ENCODE measurements at regions of chr22 and their contacts with region 1.

Region 1: DNA sequence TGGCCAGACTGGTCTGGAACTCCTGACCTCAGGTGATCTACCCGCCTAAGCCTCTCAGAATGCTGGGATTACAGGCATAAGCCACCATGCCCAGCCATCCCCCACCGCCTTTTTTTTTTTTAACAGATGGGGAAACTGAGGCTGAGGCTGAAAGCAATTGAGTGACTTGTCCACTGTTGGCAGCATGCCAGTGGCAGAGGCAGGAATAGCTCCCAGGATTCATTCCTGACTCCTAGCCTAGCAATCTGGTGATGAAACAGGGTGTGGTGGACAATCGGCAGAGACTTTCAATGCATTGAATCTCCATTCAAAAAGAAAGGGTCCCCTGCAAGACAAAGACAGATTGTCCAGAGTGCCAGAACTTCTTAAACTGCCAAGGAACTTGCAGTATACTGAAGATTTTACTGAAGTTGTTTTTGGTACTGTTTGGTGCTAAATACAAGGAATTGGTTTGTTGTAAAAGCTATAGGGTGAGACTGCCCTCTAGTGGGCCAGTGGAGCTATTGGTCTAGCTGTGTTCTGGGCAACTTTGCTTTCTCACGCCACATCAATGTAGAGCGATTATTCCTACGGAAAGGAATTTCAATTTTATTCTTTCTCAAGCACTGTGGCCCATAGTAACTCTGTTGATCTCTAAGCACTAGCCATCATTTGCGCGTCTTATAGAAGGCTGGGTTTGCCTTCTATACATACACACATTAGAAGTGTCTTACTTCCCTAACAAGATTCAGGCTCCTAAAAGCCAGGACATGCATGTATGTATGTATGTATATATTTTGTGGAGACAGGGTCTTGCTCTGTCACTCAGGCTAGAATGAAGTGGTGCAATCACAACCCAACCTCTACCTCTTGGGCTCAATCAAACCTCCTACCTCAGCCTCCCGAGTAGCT is 21.0 kb downstream of the C22orf31 start:
- DNase-seq: peak; percentile 36
- ATAC-seq: peak; percentile 92
- H3K4me3 ChIP-seq: no peak overlapping the region
- H3K27ac ChIP-seq: no peak overlapping the region
- H3K4me1 ChIP-seq: no peaks in the 10 kb centered on the region
- H3K27me3 ChIP-seq: no peaks in the 10 kb centered on the region
- CTCF ChIP-seq: peak; percentile 92 to 98 (median 94)
- EP300 ChIP-seq: no peak
- POLR2A ChIP-seq: no peak
- RAD21 ChIP-seq: peak; percentile 97

Region 2: GRCh38 chr22:28600546-28601143 is 440.0 kb before region 1 on chr22:
- CTCF ChIA-PET with region 1: interaction called, 57 read pairs
- POLR2A ChIA-PET with region 1: no interaction called
- RAD21 ChIA-PET with region 1: interaction called, 32 read pairs
- SMC1A ChIA-PET with region 1: interaction called, 42 read pairs
- in situ Hi-C with region 1: loop called (anchors 5 kb)
- intact Hi-C with region 1: loop called (anchors 2 kb)
- DNase-seq: no peak
- ATAC-seq: peak; percentile 59
- H3K4me3 ChIP-seq: no peak overlapping the region
- H3K27ac ChIP-seq: no peak overlapping the region
- H3K4me1 ChIP-seq: no peaks in the 10 kb centered on the region
- H3K27me3 ChIP-seq: no peaks in the 10 kb centered on the region
- CTCF ChIP-seq: peak; percentile 23 to 63 (median 37); a peak in 4 of 6 replicates
- EP300 ChIP-seq: no peak
- POLR2A ChIP-seq: no peak
- RAD21 ChIP-seq: peak; percentile 87

Region 3: DNA sequence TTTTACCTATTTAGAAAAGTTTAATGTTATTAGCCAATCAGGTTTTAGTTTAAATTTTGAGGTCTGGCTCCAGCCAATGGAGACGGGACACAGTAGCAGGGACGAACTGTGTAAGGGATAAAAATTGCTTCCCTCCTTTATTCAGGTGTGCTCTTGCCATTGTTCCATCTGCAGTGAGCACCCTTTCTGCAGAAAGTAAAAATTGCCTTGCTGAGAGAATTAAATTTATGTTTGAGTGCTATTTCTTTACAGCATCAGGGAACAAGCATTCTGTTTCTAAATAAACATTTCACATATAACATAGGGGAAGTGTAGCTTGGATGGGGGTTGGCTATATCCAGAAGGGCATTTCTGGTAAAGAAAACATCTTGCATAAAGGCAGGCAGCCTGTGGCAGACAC is 193.6 kb before region 1 on chr22:
- CTCF ChIA-PET with region 1: interaction called, 17 read pairs
- POLR2A ChIA-PET with region 1: interaction called, 6 read pairs
- RAD21 ChIA-PET with region 1: interaction called, 8 read pairs
- SMC1A ChIA-PET with region 1: interaction called, 39 read pairs
- in situ Hi-C with region 1: loop called (anchors 5 kb)
- intact Hi-C with region 1: no loop called
- DNase-seq: no peak
- ATAC-seq: no peak
- H3K4me3 ChIP-seq: no peak overlapping the region
- H3K27ac ChIP-seq: no peak overlapping the region
- H3K4me1 ChIP-seq: no peaks in the 10 kb centered on the region
- H3K27me3 ChIP-seq: no peaks in the 10 kb centered on the region
- CTCF ChIP-seq: no peak
- EP300 ChIP-seq: no peak
- POLR2A ChIP-seq: no peak
- RAD21 ChIP-seq: no peak

Region 4: GRCh38 chr22:28911777-28912669 is 128.6 kb before region 1 on chr22:
- CTCF ChIA-PET with region 1: interaction called, 87 read pairs
- POLR2A ChIA-PET with region 1: interaction called, 7 read pairs
- RAD21 ChIA-PET with region 1: interaction called, 84 read pairs
- SMC1A ChIA-PET with region 1: interaction called, 70 read pairs
- in situ Hi-C with region 1: no loop called
- intact Hi-C with region 1: no loop called
- DNase-seq: no peak
- ATAC-seq: no peak
- H3K4me3 ChIP-seq: no peak overlapping the region
- H3K27ac ChIP-seq: no peak overlapping the region
- H3K4me1 ChIP-seq: peaks cover 22% of the 10 kb centered on the region
- H3K27me3 ChIP-seq: no peaks in the 10 kb centered on the region; a peak in 1 of 4 replicates
- CTCF ChIP-seq: no peak
- EP300 ChIP-seq: no peak
- POLR2A ChIP-seq: no peak
- RAD21 ChIP-seq: no peak

Region 5: DNA sequence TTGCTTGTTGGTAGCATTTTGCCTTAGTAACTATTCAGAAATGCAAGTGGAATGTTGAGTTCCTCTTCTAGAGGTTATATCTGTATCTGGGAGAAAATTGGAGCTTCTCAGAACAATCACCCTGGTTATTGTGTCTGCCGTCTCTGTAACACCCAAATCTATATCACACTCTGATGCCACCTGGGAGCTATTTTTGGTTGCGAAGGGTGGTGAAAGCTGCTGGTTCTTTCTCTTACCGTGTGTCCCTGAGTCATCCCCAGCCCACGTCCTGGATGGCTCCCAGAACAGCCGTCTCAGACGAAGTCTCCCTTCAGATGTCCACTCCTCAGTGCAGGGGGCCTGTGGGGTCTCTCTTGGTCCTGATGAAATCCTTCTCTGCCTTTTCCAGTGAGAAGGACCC is 62.5 kb before region 1 on chr22:
- CTCF ChIA-PET with region 1: interaction called, 11 read pairs
- POLR2A ChIA-PET with region 1: interaction called, 4 read pairs
- RAD21 ChIA-PET with region 1: interaction called, 8 read pairs
- SMC1A ChIA-PET with region 1: interaction called, 19 read pairs
- in situ Hi-C with region 1: no loop called
- intact Hi-C with region 1: no loop called
- DNase-seq: no peak
- ATAC-seq: peak; percentile 57
- H3K4me3 ChIP-seq: no peak overlapping the region
- H3K27ac ChIP-seq: no peak overlapping the region
- H3K4me1 ChIP-seq: no peaks in the 10 kb centered on the region
- H3K27me3 ChIP-seq: 0 out of 4 replicates have a peak, but pooled peaks cover 0 to 5% of the 10 kb centered on the region in 2 experiments
- CTCF ChIP-seq: no peak
- EP300 ChIP-seq: no peak
- POLR2A ChIP-seq: no peak
- RAD21 ChIP-seq: no peak

Region 6: GRCh38 chr22:29072193-29072978 is 31.8 kb after region 1 on chr22:
- CTCF ChIA-PET with region 1: no interaction called
- POLR2A ChIA-PET with region 1: no interaction called
- RAD21 ChIA-PET with region 1: interaction called, 17 read pairs
- SMC1A ChIA-PET with region 1: interaction called, 6 read pairs
- in situ Hi-C with region 1: no loop called
- intact Hi-C with region 1: no loop called
- DNase-seq: no peak
- ATAC-seq: peak; percentile 93
- H3K4me3 ChIP-seq: peak overlapping the region; percentile 45; the same call in 1 of the 2 replicates
- H3K27ac ChIP-seq: no peak overlapping the region
- H3K4me1 ChIP-seq: no peaks in the 10 kb centered on the region; the same call in 1 of the 2 replicates
- H3K27me3 ChIP-seq: peaks cover 5 to 15% of the 10 kb centered on the region in 2 experiments
- CTCF ChIP-seq: no peak
- EP300 ChIP-seq: no peak
- POLR2A ChIP-seq: no peak
- RAD21 ChIP-seq: no peak

Region 7: DNA sequence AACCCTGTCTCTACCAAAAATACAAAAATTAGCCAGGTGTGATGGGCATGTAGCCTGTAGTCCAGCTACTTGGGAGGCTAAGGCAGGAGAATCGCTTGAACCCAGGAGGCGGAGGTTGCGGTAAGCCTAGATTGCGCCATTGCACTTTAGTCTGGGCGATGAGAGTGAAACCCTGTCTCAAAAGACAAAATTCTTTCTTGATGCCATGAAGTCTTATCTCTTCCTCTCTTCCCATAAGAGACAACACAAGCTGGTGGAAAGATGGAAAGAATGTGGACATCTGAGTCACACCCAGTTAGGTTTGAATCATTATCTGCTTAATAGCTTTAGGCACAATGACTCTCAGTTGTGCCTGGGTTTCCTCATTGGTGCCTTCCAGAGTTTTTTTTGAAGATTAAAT is 67.5 kb after region 1 on chr22:
- CTCF ChIA-PET with region 1: no interaction called
- POLR2A ChIA-PET with region 1: no interaction called
- RAD21 ChIA-PET with region 1: no interaction called
- SMC1A ChIA-PET with region 1: no interaction called
- in situ Hi-C with region 1: no loop called
- intact Hi-C with region 1: no loop called
- DNase-seq: no peak
- ATAC-seq: no peak
- H3K4me3 ChIP-seq: no peak overlapping the region
- H3K27ac ChIP-seq: no peak overlapping the region
- H3K4me1 ChIP-seq: no peaks in the 10 kb centered on the region
- H3K27me3 ChIP-seq: no peaks in the 10 kb centered on the region; a peak in 1 of 4 replicates
- CTCF ChIP-seq: no peak
- EP300 ChIP-seq: no peak
- POLR2A ChIP-seq: no peak
- RAD21 ChIP-seq: no peak

Measured in GM12878 (cell line).